Activated T-helper 2 cell treated with anti-CD3 and anti-CD28 coated beads, Interferon-gamma antibody, Interleukin-2, Interleukin-4, amounts not matched to agents 10 μg/mL and 5 μg/mL and 100 μg/mL, durations not matched to agents 14 hours and 24 hours and 36 hours (primary cell): ENCODE measurements at regions of chr11 and their contacts with region 1.

Region 1: DNA sequence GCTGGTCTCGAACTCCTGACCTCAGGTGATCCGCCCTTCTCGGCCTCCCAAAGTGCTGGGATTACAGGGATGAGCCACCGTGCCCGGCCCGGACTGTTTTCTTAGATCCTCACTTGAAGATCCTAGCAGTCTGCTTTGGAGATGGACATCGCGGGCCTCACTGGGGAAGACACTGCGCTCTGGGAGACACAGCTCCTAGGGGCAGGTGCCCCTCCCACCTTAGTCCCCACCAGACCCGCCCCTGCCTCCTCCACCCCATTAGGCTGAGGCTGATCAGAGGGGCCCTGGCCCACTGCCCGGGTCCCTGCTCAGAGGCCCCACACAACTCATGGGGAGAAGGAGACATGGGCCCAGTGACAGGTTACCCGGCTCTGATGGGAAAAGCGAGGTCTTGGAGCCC is 11.3 kb upstream of the LTO1 start:
- DNase-seq: no peak
- H3K4me3 Mint-ChIP-seq: no peak overlapping the region
- H3K27ac Mint-ChIP-seq: no peak overlapping the region
- H3K4me1 Mint-ChIP-seq: peaks cover 14% of the 10 kb centered on the region
- H3K27me3 Mint-ChIP-seq: peaks cover 1% of the 10 kb centered on the region

Region 2: GRCh38 chr11:69801519-69802335 is 115.3 kb after region 1 on chr11:
- intact Hi-C with region 1: loop called (anchors 5 kb)
- DNase-seq: no peak
- H3K4me3 Mint-ChIP-seq: no peak overlapping the region
- H3K27ac Mint-ChIP-seq: no peak overlapping the region
- H3K4me1 Mint-ChIP-seq: no peaks in the 10 kb centered on the region
- H3K27me3 Mint-ChIP-seq: peaks cover 3% of the 10 kb centered on the region

Region 3: DNA sequence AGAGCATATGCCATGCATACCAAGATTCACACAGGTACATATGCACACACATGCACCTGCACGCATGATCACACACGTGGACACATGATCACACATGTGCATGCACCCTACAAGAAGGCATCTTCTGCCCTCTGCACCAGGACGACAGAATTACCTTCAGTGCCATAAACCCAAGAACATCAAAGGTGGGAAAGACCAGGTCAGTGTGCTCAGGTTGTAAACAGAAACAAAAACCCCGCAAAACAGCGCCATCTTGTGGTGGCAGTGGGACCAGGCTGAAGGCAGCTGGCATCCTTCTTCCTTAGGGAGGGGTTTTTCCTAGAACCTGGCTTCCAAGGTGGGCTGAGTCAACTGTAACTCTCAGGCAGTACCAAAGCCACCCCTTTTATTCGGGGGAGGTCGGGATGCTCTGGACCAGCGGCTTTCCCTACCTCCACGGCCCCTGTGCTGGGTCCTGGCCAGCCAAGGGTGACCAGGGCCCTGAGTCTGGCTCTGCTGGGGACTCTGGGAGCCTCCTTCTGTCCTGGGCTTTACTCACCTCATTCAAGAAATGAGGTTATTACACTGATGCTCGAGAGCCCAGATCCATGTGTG is 202.1 kb after region 1 on chr11:
- intact Hi-C with region 1: loop called (anchors 1 kb)
- DNase-seq: peak; percentile 49
- H3K4me3 Mint-ChIP-seq: no peak overlapping the region
- H3K27ac Mint-ChIP-seq: no peak overlapping the region
- H3K4me1 Mint-ChIP-seq: no peaks in the 10 kb centered on the region
- H3K27me3 Mint-ChIP-seq: peaks cover 16% of the 10 kb centered on the region

Region 4: DNA sequence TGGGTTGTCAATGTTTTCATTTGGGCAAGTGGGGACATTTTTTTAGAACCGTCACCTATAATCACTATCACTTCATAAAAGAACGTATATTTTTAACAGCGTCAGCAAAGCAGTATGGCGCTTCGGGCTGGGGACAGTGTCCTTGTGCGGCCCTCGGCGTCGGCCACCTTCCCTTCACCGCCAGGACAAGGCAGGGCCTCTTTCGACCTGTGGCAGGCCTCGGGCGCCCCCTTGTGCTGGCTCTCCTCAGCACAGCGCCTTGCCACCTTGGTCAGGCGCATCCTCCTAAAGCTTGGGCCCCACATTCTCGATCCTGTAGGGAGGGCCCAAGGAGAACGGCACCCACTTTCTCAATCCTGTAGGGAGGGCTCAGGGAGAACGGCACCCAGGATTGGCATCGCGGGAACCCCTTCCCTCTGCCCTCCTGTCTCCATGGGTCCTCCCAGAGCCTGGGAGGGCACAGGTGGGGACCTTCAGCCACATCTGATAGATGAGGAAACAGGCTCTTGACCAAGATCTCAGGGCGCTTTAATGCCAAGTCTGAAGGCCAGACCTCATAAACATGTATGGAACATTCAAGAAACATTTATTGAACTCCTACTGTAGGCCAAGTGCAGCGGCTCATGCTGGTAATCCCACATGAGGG is 505.2 kb after region 1 on chr11:
- intact Hi-C with region 1: loop called (anchors 5 kb)
- DNase-seq: peak; percentile 54
- H3K4me3 Mint-ChIP-seq: no peak overlapping the region
- H3K27ac Mint-ChIP-seq: no peak overlapping the region
- H3K4me1 Mint-ChIP-seq: peaks cover 3% of the 10 kb centered on the region
- H3K27me3 Mint-ChIP-seq: no peaks in the 10 kb centered on the region